ENCODE measurements at regions of chr2 and their contacts with region 1.

Region 1: DNA sequence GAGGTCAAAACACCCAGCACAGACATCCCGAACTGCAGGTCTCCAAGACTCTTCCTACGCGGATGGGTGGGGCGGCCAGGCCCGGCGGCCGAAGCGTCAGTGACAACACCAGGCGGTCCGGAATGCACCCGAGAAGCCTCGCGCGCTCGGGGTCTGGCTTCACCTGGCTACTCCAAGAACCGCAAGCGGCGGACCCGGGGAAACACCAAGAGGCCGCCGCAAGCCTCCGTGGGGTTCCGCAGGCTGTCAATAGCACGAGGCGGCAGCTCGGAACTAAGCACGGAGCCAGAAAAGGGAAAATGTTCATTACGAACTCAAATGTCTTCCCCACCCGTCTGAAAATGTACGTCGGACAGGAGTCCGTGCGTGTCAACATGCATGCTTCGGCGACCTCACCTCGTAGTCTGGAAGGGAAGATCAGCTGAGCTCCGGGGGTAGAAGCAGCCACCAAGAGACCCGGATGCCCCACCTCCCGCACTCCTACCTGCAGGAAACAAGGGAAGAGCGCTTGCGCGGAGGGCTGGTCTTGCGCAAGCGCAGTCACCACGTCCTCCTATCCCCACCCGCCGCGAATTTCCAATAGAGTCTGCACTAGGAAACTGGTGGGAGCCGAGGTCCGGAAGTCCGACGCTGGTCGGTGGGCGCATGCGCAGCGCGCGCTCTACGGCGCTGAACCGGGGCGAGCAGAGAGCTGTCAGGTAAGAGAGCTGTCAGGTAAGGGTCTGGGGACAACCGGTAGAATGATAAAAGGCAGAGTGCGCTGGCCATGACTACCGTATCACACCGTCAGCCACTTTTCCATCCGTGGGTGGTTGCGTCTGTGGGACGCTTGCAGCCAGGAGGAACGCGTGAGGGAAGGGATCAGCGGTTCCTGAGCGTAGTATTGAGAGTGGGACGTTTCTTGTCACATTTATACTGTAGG is at the starts of genes GPATCH11 and HEATR5B:
- DNase-seq: peak; percentile 76 to 94 (median 92)
- ATAC-seq: peak; percentile 87
- H3K4me3 ChIP-seq: peak within 1 kb of the TSS; percentile 74
- H3K4me3 Mint-ChIP-seq: peak within 1 kb of the TSS in 1 of 10 donors; percentile 64
- H3K27ac ChIP-seq: peak within 1 kb of the TSS; percentile 85
- H3K27ac Mint-ChIP-seq: no peak within 1 kb of the TSS
- H3K4me1 ChIP-seq: peaks cover 35 to 45% of the 10 kb centered on the region in 2 donors
- H3K4me1 Mint-ChIP-seq: peaks cover 8 to 62% (median 50%) of the 10 kb centered on the region in 7 donors
- H3K27me3 ChIP-seq: no peaks in the 10 kb centered on the region
- H3K27me3 Mint-ChIP-seq: no peaks in the 10 kb centered on the region
- total RNA-seq, gene GPATCH11: 6.0 to 19.0 (median 11.1) TPM
- total RNA-seq, gene HEATR5B: 25.2 to 50.5 (median 39.3) TPM

Region 2: GRCh38 chr2:36618028-36618780 is 465.9 kb before region 1 on chr2:
- CTCF ChIA-PET with region 1: no interaction called
- POLR2A ChIA-PET with region 1: no interaction called
- intact Hi-C with region 1: no loop called
- DNase-seq: no peak
- ATAC-seq: peak; percentile 55
- H3K4me3 ChIP-seq: no peak overlapping the region
- H3K4me3 Mint-ChIP-seq: no peak overlapping the region
- H3K27ac ChIP-seq: no peak overlapping the region
- H3K27ac Mint-ChIP-seq: no peak overlapping the region
- H3K4me1 ChIP-seq: no peaks in the 10 kb centered on the region
- H3K4me1 Mint-ChIP-seq: no peaks in the 10 kb centered on the region
- H3K27me3 ChIP-seq: no peaks in the 10 kb centered on the region
- H3K27me3 Mint-ChIP-seq: peaks cover 9 to 32% (median 13%) of the 10 kb centered on the region in 5 donors

Region 3: DNA sequence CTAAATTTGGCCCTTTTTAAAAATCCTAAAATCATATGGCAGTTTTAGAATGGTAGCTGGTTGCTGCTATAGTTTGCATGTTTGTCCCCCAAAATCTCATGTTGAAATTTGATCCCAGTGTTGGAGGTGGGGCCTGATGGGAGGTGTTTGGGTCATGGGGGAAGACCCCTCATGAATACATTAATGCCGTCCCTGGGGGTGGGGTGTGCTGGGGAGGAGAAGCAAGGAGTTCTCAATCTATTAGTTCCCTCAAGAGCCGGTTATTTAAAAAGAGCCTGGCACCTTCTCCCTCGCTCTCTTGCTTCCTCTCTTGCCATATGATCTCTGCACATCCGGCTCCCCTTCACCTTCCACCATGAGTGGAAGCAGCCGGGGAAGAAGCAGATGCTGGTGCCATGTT is 21.0 kb after region 1 on chr2:
- CTCF ChIA-PET with region 1: no interaction called
- POLR2A ChIA-PET with region 1: interaction called, 7 read pairs
- intact Hi-C with region 1: loop called in 1 of 2 experiments (anchors 2 kb)
- DNase-seq: no peak
- ATAC-seq: no peak
- H3K4me3 ChIP-seq: no peak overlapping the region
- H3K4me3 Mint-ChIP-seq: no peak overlapping the region
- H3K27ac ChIP-seq: no peak overlapping the region
- H3K27ac Mint-ChIP-seq: peak overlapping the region in 2 of 9 donors; percentile 4 to 62
- H3K4me1 ChIP-seq: no peaks in the 10 kb centered on the region
- H3K4me1 Mint-ChIP-seq: no peaks in the 10 kb centered on the region
- H3K27me3 ChIP-seq: no peaks in the 10 kb centered on the region
- H3K27me3 Mint-ChIP-seq: no peaks in the 10 kb centered on the region

Region 4: GRCh38 chr2:37156857-37157714 is 73.0 kb after region 1 on chr2 and contains the start of gene EIF2AK2:
- CTCF ChIA-PET with region 1: no interaction called
- POLR2A ChIA-PET with region 1: no interaction called
- intact Hi-C with region 1: loop called (anchors 1 kb)
- DNase-seq: peak; percentile 59 to 85 (median 80)
- ATAC-seq: peak; percentile 96
- H3K4me3 ChIP-seq: peak within 1 kb of the TSS; percentile 92
- H3K4me3 Mint-ChIP-seq: peak within 1 kb of the TSS; percentile 88 to 99 (median 94)
- H3K27ac ChIP-seq: peak within 1 kb of the TSS; percentile 81
- H3K27ac Mint-ChIP-seq: peak within 1 kb of the TSS; percentile 86 to 96 (median 92)
- H3K4me1 ChIP-seq: peaks cover 18 to 25% of the 10 kb centered on the region in 2 donors
- H3K4me1 Mint-ChIP-seq: peaks cover 29 to 57% (median 48%) of the 10 kb centered on the region in 7 donors
- H3K27me3 ChIP-seq: no peaks in the 10 kb centered on the region
- H3K27me3 Mint-ChIP-seq: peaks cover 0 to 4% (median 0%) of the 10 kb centered on the region in 5 donors
- total RNA-seq, gene EIF2AK2: 21.2 to 91.9 (median 24.2) TPM

Region 5: DNA sequence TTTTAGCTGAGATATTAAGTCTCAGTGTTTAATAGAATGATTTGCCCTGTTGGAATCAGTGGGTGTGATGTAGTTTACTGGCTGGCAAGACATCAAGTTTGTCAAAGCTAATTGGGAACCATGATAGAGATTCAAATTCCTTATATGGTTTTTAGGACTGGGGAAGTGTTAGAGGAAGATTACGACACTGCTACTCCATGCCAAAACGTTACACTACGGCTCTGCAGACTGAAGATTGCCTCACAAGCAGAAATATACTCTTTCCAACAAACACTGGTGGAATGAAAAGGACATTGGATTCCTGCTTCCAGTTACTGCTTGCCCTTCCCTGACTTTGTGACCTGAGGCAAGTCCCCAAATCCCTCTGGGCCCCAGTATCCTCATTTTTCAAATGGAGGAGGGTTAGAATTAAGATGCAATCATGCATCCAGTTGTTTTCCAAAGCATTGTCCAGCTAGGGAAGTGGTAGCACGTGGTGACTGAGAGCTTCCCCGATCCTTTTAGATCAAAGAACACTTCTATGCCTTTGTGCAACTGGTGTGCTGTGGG is 439.8 kb after region 1 on chr2:
- CTCF ChIA-PET with region 1: no interaction called
- POLR2A ChIA-PET with region 1: no interaction called
- intact Hi-C with region 1: no loop called
- DNase-seq: no peak
- ATAC-seq: peak; percentile 42
- H3K4me3 ChIP-seq: no peak overlapping the region
- H3K4me3 Mint-ChIP-seq: no peak overlapping the region
- H3K27ac ChIP-seq: no peak overlapping the region
- H3K27ac Mint-ChIP-seq: peak overlapping the region in 1 of 9 donors; percentile 47
- H3K4me1 ChIP-seq: no peaks in the 10 kb centered on the region
- H3K4me1 Mint-ChIP-seq: no peaks in the 10 kb centered on the region
- H3K27me3 ChIP-seq: no peaks in the 10 kb centered on the region
- H3K27me3 Mint-ChIP-seq: peaks cover 0 to 24% (median 0%) of the 10 kb centered on the region in 5 donors